CD4-positive, alpha-beta T cell (primary cell): ENCODE measurements at regions of chr6 and their contacts with region 1.

Region 1: DNA sequence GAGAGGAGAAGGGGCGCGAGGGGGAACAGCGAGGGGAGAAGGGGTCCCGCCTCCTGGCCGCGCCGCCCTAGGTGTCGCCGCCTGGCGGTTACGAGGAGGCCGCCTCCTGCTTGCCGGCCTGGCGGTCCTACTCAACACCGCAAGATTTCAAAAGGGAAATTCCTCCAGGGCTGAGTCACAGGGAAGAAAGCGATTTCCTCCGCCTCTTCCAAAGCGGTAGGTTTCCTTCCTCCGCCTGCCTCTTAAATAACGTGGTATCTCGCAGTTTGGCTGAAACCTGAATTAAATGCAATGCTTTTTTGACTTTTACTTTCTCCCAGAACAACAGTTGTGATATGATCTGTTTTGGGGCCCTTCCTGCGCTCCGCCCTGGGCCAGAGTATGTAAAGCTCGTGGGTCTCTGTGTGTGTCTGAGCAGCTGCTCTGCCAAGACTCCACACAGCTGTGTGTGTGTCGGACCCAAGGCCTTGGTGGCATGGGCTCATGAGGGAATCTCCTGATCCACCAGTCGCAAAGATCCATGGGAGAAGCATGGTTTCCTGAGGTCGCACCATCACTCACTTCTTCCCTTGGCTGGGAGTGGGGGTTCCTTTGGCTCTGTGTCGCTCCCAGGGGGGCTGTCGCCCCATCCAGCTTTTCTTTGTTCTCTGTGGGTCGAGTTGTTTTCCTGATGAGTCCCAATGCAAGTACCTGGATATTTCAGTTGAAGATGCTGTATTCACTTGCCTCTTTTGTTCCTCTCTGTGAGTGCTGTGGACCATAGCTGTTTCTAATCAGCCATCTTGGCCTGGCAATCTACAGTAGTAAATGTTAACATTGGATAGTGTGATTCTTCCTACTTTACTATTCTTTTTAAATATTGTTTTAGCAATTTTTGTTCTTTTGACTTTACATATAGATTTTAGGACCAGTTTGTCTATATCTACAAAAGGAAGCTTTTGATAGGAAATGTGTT is 31.6 kb upstream of the NOTCH4 start:
- DNase-seq: peak; percentile 19 to 87 (median 34)
- ATAC-seq: peak; percentile 82
- H3K4me3 ChIP-seq: peak overlapping the region; percentile 35
- H3K4me3 Mint-ChIP-seq: peak overlapping the region; percentile 63
- H3K27ac ChIP-seq: no peak overlapping the region
- H3K27ac Mint-ChIP-seq: no peak overlapping the region
- H3K4me1 ChIP-seq: peaks cover 16% of the 10 kb centered on the region
- H3K4me1 Mint-ChIP-seq: peaks cover 27% of the 10 kb centered on the region
- H3K27me3 ChIP-seq: no peaks in the 10 kb centered on the region
- H3K27me3 Mint-ChIP-seq: no peaks in the 10 kb centered on the region
- CTCF ChIP-seq: peak; percentile 54

Region 2: GRCh38 chr6:32796848-32797776 is 541.6 kb after region 1 on chr6:
- CTCF ChIA-PET with region 1: no interaction called
- POLR2A ChIA-PET with region 1: no interaction called
- intact Hi-C with region 1: loop called in 1 of 2 experiments (anchors 10 kb)
- DNase-seq: peak; percentile 57 to 88 (median 76)
- ATAC-seq: peak; percentile 73
- H3K4me3 ChIP-seq: peak overlapping the region; percentile 14
- H3K4me3 Mint-ChIP-seq: peak overlapping the region; percentile 40
- H3K27ac ChIP-seq: no peak overlapping the region
- H3K27ac Mint-ChIP-seq: no peak overlapping the region
- H3K4me1 ChIP-seq: peaks cover 9% of the 10 kb centered on the region
- H3K4me1 Mint-ChIP-seq: peaks cover 26% of the 10 kb centered on the region
- H3K27me3 ChIP-seq: peaks cover 14 to 21% of the 10 kb centered on the region in 2 experiments
- H3K27me3 Mint-ChIP-seq: peaks cover 65% of the 10 kb centered on the region
- CTCF ChIP-seq: peak; percentile 97